Right ventricle myocardium inferior (tissue), 1 donor: ENCODE measurements at regions of chr15 and their contacts with region 1.

Region 1: DNA sequence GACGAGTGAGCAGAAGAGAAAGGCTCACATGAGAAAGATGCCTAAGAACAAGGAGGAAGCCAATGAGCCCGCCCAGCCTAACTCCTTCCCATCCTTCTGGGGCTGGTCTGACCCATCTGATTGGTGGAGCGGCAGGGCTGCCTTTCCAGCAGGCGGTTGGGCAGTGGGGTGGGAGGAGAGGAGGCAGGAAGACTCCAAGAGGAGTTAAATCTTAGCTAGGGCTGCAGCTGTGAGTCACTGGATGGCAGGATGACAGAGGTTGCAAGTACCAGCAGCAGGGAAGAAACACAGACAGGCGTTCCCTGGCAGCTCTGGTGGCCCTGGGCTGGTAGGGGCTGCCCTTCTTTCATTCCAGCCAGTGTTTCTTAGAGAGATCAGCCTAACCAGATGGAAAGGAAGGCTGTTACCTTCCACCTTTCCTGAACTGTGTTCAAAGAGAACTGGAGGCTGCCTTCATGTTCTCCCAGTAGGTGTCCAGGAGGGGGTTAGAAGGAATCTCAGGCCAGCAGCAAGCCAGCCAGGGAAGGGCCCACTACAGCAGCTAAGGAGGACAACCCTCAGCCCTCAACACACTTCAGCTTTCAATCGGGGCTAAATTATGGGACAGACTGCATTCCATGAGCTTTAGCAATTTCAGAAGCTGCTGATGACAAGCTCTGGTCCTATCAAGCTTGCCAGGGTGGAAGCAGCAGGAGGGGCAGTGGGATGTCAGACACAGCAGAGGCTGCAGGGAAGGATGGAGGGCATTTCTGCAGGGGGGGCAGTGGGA is 50.3 kb downstream of the CHSY1 start:
- DNase-seq: peak; percentile 93
- ATAC-seq: peak; percentile 96

Region 2: DNA sequence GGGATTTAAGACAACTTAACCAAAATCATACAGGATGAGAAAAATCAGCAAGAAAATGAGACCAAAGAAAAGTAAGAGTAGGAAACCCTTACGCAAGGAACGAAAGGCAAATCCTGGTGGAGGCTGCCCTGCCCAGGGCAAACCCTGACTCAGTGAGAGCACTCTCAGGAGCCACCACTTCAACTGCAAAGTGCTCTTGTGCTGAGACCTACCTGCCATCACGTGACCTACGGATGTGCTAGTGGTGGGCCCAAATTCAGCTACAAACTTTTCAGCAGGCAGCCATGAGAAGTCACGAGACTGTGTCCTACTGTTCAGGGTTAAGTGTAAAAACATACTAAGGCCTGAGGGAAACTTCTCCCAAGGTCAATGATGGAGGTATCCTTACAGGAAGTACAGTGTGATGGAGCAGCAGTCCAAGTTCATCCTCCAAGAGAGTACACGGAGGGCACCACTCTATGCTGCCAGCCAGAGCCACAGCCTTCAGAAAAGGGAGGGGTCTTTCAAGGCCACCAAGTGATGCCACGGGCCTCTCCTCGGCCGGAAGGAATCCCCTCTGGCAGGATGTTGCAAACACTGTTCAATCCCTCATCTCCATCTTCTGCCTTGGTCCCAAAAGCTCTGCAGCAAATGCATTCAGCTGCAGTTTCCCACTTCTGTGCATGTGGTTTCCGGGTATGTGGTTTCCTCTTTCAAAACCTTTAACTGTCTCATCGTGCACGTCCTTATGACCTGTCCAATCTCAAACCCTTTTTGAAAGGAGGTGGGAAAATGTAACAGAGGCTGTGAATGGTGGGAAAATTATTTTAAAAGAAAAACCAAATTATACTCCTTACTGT is 40.8 kb after region 1 on chr15:
- intact Hi-C with region 1: loop called (anchors 5 kb)
- DNase-seq: no peak
- ATAC-seq: no peak